ENCODE measurements at regions of chr7 and their contacts with region 1.

Region 1: GRCh38 chr7:74206589-74207120 is 3.2 kb upstream of the LAT2 start:
- DNase-seq: peak; percentile 85
- ATAC-seq: peak; percentile 75
- H3K4me3 Mint-ChIP-seq: no peak overlapping the region
- H3K27ac Mint-ChIP-seq: no peak overlapping the region
- H3K4me1 Mint-ChIP-seq: peaks cover 32% of the 10 kb centered on the region
- H3K27me3 Mint-ChIP-seq: peaks cover 3% of the 10 kb centered on the region

Region 2: DNA sequence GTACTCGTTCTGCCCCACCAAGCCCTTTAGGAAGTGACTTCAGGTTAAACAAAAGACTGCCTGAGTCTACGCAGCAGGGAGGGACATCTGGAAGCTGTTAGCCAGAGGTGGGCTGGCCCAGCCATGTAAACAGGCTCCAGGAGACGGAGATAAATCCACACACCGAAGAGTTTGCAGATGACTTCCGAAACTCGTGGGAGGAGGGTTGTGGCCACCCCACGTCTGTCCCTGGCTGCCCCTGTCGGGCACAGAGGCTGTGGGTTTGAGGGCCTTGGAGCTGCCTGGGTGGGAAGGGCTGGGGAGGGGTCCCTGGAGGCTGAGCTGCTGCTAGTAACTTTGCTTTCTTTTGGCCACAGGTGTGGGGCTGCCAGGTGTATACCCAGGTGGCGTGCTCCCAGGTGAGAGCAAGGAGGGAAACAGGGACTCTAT is 163.1 kb before region 1 on chr7:
- CTCF ChIA-PET with region 1: no interaction called
- DNase-seq: no peak
- ATAC-seq: no peak
- H3K4me3 Mint-ChIP-seq: no peak overlapping the region
- H3K27ac Mint-ChIP-seq: no peak overlapping the region
- H3K4me1 Mint-ChIP-seq: no peaks in the 10 kb centered on the region
- H3K27me3 Mint-ChIP-seq: no peaks in the 10 kb centered on the region

Region 3: DNA sequence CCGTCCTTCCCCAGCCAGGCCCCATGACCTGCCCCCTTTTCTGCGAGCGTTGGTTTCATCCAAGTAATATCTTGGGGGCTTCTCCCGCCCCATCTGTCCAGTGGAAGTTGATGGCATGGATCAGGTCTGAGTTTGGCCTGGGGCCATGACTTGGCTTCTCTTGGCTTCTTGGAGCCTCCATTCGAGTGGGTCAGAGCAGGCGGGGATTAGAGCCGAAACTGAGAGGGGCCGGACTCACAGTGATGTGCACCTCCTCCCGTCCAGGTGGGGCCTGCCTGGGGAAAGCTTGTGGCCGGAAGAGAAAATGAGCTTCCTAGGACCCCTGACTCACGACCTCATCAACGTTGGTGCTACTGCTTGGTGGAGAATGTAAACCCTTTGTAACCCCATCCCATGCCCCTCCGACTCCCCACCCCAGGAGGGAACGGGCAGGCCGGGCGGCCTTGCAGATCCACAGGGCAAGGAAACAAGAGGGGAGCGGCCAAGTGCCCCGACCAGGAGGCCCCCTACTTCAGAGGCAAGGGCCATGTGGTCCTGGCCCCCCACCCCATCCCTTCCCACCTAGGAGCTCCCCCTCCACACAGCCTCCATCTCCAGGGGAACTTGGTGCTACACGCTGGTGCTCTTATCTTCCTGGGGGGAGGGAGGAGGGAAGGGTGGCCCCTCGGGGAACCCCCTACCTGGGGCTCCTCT is 138.1 kb before region 1 on chr7:
- CTCF ChIA-PET with region 1: interaction called, 26 read pairs
- DNase-seq: no peak
- ATAC-seq: no peak
- H3K4me3 Mint-ChIP-seq: no peak overlapping the region
- H3K27ac Mint-ChIP-seq: no peak overlapping the region
- H3K4me1 Mint-ChIP-seq: peaks cover 8% of the 10 kb centered on the region
- H3K27me3 Mint-ChIP-seq: no peaks in the 10 kb centered on the region

Region 4: GRCh38 chr7:74193054-74193453 is 13.6 kb before region 1 on chr7:
- CTCF ChIA-PET with region 1: interaction called, 38 read pairs
- DNase-seq: no peak
- ATAC-seq: no peak
- H3K4me3 Mint-ChIP-seq: no peak overlapping the region
- H3K27ac Mint-ChIP-seq: no peak overlapping the region
- H3K4me1 Mint-ChIP-seq: peaks cover 16% of the 10 kb centered on the region
- H3K27me3 Mint-ChIP-seq: no peaks in the 10 kb centered on the region

Region 5: GRCh38 chr7:74231232-74231590 is 24.6 kb after region 1 on chr7:
- CTCF ChIA-PET with region 1: interaction called, 28 read pairs
- DNase-seq: no peak
- ATAC-seq: no peak
- H3K4me3 Mint-ChIP-seq: no peak overlapping the region
- H3K27ac Mint-ChIP-seq: peak overlapping the region; percentile 62
- H3K4me1 Mint-ChIP-seq: peaks cover 40% of the 10 kb centered on the region
- H3K27me3 Mint-ChIP-seq: no peaks in the 10 kb centered on the region

Region 6: GRCh38 chr7:74254129-74254857 is 47.6 kb after region 1 on chr7 and contains the start of gene RFC2:
- CTCF ChIA-PET with region 1: interaction called, 14 read pairs
- DNase-seq: peak; percentile 97
- ATAC-seq: peak; percentile 95
- H3K4me3 Mint-ChIP-seq: peak within 1 kb of the TSS; percentile 96
- H3K27ac Mint-ChIP-seq: peak within 1 kb of the TSS; percentile 89
- H3K4me1 Mint-ChIP-seq: peaks cover 40% of the 10 kb centered on the region
- H3K27me3 Mint-ChIP-seq: peaks cover 2% of the 10 kb centered on the region
- total RNA-seq, gene RFC2: 70.5 to 76.8 TPM

Region 7: GRCh38 chr7:74289018-74289658 is 82.5 kb after region 1 on chr7 and contains the start of gene CLIP2:
- CTCF ChIA-PET with region 1: interaction called, 23 read pairs
- DNase-seq: peak; percentile 76
- ATAC-seq: peak; percentile 91
- H3K4me3 Mint-ChIP-seq: peak within 1 kb of the TSS; percentile 74
- H3K27ac Mint-ChIP-seq: peak within 1 kb of the TSS; percentile 58
- H3K4me1 Mint-ChIP-seq: peaks cover 20% of the 10 kb centered on the region
- H3K27me3 Mint-ChIP-seq: peaks cover 51% of the 10 kb centered on the region
- total RNA-seq, gene CLIP2: 1.9 to 4.6 TPM

Region 8: GRCh38 chr7:74401137-74401859 is 194.6 kb after region 1 on chr7:
- CTCF ChIA-PET with region 1: interaction called, 197 read pairs
- DNase-seq: peak; percentile 78
- ATAC-seq: peak; percentile 74
- H3K4me3 Mint-ChIP-seq: no peak overlapping the region
- H3K27ac Mint-ChIP-seq: no peak overlapping the region
- H3K4me1 Mint-ChIP-seq: no peaks in the 10 kb centered on the region
- H3K27me3 Mint-ChIP-seq: no peaks in the 10 kb centered on the region

Measured in activated CD8-positive, alpha-beta memory T cell treated with anti-CD3 and anti-CD28 coated beads, Interleukin-2, amount 10 ng/mL, durations not matched to agents 7 days and 5 days (primary cell).